Esophagus muscularis mucosa (tissue), 4 donors: ENCODE measurements at regions of chr12 and their contacts with region 1.

Region 1: DNA sequence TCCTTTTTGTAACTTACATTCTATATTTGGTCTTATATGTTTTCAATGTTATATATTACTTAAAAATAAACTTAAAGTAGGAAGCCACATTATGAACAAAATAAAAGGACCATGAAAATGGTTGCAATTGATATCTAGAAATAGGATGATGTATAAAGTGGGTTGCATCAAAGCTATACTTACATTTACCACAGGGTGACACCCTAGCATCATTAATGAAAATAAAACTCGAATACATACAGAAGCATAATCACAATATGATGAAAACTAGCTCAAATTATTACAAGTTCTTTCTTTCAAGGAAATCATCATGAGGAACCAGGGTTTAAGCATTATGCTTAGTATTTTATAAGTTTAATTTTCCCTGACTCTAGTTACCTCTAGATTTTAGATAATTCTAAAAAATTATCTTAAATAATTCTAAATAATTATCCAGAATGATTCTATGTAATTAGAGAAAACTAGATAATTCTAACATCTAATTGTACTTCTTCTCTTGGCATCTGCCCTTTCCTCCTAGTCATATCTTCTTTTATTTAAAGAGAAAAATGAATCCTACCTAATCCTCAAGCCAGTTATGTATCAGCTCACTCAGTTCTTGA is 31.2 kb downstream of the TAS2R7 start:
- DNase-seq: no peak
- H3K4me3 ChIP-seq: no peak overlapping the region
- H3K27ac ChIP-seq: no peak overlapping the region
- H3K4me1 ChIP-seq: no peaks in the 10 kb centered on the region
- H3K27me3 ChIP-seq: peaks cover 0 to 27% (median 2%) of the 10 kb centered on the region in 4 donors
- CTCF ChIP-seq: peak; percentile 64 to 70 (median 66)
- EP300 ChIP-seq: no peak
- POLR2A ChIP-seq: no peak

Region 2: GRCh38 chr12:10453144-10453543 is 318.1 kb before region 1 on chr12 and contains the start of gene KLRC1:
- intact Hi-C with region 1: no loop called
- DNase-seq: no peak
- H3K4me3 ChIP-seq: no peak within 1 kb of the TSS
- H3K27ac ChIP-seq: no peak within 1 kb of the TSS
- H3K4me1 ChIP-seq: no peaks in the 10 kb centered on the region
- H3K27me3 ChIP-seq: no peaks in the 10 kb centered on the region
- CTCF ChIP-seq: no peak
- EP300 ChIP-seq: no peak
- POLR2A ChIP-seq: no peak
- total RNA-seq, gene KLRC1: 0.50 to 2.1 TPM in 2 of 4 donors, not detected in the others

Region 3: DNA sequence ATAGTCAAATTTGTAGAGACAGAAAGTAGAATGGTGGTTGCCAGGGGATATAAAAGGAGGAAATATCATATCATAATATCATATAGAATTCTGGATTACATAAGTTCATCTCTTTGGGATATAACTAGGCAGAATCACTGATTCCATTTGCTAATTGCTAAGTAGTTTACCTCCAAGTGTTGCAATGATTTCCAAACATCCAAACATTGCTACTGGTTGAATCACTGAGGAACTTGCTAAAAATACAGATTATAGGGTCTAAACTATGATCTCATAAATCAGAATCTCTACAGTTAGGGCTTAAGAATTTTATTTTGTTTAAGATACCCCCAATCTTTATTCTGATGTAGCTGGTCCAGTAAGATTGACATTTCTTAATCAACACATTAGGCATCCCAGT is 431.6 kb after region 1 on chr12:
- intact Hi-C with region 1: loop called (anchors 2 kb)
- DNase-seq: no peak
- H3K4me3 ChIP-seq: no peak overlapping the region
- H3K27ac ChIP-seq: no peak overlapping the region
- H3K4me1 ChIP-seq: no peaks in the 10 kb centered on the region
- H3K27me3 ChIP-seq: no peaks in the 10 kb centered on the region
- CTCF ChIP-seq: no peak
- EP300 ChIP-seq: no peak
- POLR2A ChIP-seq: no peak

Region 4: GRCh38 chr12:11486623-11487444 is 715.6 kb after region 1 on chr12:
- intact Hi-C with region 1: loop called (anchors 2 kb)
- DNase-seq: no peak
- H3K4me3 ChIP-seq: no peak overlapping the region
- H3K27ac ChIP-seq: no peak overlapping the region
- H3K4me1 ChIP-seq: peaks cover 0 to 4% (median 0%) of the 10 kb centered on the region in 4 donors
- H3K27me3 ChIP-seq: peaks cover 0 to 7% (median 0%) of the 10 kb centered on the region in 4 donors
- CTCF ChIP-seq: peak; percentile 92 to 93 (median 92)
- EP300 ChIP-seq: no peak
- POLR2A ChIP-seq: no peak